Right cardiac atrium (tissue), 5 donors: ENCODE measurements at regions of chr20 and their contacts with region 1.

Region 1: DNA sequence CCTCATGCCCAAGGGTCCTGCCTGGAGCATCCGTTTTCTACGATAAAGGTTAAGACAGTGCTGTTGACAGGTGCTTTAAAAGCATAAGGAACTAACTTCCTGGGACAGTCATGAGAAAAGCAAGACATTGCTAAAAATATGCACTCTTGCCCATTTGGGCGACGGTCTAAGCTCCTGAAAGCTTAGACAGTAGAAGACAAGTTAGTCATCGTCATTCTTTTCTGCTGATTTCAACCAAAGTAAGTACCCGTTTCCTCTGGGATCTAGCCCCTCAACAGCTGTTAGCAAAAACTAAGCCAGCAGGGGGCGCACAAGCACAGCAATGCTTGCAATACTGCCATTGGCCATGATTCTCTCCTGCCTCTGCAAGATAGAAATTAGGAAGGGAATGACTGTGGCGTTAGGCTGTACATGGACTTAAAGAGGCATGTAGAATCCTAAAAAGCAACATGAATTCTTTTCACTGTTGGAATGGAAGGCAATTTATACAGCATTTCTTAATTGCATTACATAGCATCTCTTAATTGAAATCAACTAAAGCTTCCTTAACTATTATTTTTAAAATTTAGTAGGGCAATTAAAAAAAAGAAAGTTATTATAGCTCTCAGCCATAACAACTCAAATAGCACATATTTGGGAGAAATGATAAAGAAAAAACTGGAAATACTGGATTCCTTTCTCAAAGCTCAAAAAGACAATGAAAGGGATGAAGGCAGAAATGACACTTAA is 147.8 kb upstream of the RALGAPA2 start:
- DNase-seq: peak; percentile 87 to 95 (median 91)
- ATAC-seq: peak; percentile 71 to 86
- H3K4me3 ChIP-seq: no peak overlapping the region
- H3K27ac ChIP-seq: no peak overlapping the region
- H3K4me1 ChIP-seq: no peaks in the 10 kb centered on the region
- H3K27me3 ChIP-seq: no peaks in the 10 kb centered on the region

Region 2: DNA sequence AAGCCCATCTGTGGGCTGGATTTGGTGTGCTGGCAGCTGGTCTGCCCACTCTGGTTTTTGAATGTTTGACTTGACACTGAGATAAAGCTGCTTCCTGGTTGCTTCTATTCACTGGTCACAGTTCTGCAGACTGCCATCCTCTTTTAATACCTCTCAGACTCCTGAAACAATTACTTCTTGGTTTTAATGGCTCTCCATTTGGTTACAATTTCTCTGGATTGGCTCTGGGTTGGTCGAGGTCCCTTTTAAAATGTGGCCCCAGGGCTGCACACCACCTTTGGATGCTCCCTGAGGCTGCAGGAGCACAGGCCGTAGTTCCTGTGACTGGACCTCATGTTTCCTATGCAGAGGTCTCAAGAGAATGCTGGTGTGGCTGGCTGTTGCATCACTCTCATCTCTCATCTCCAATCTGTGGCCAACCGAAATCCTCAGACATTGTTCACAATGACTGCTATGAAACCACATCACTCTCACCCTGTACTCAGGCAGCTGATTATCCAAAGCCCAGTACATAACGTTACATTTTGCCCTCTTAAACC is 393.8 kb before region 1 on chr20:
- intact Hi-C with region 1: no loop called
- DNase-seq: no peak
- ATAC-seq: peak; percentile 66 to 85
- H3K4me3 ChIP-seq: no peak overlapping the region
- H3K27ac ChIP-seq: no peak overlapping the region
- H3K4me1 ChIP-seq: peaks cover 3% of the 10 kb centered on the region
- H3K27me3 ChIP-seq: no peaks in the 10 kb centered on the region

Region 3: DNA sequence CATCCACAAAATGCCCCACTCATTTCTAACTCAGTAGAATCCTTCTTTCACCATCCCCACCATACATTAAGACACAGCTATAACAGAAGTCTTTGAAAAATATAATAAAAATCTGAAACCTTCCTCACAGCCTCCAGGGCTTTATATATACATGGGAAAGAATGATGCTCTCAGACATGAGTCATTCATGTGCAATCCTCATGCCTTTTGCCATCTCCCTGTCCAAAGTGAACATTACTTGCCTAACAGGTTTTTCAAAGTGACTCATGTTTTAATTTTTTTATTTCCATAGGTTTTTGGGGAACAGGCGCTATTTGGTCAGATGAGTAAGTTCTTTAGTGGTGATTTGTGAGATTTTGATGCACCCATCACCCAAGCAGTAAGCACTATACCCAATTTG is 310.5 kb before region 1 on chr20:
- intact Hi-C with region 1: no loop called
- DNase-seq: no peak
- ATAC-seq: no peak
- H3K4me3 ChIP-seq: no peak overlapping the region
- H3K27ac ChIP-seq: no peak overlapping the region
- H3K4me1 ChIP-seq: no peaks in the 10 kb centered on the region
- H3K27me3 ChIP-seq: no peaks in the 10 kb centered on the region

Region 4: GRCh38 chr20:20956513-20956931 is 96.3 kb after region 1 on chr20:
- intact Hi-C with region 1: no loop called
- DNase-seq: no peak
- ATAC-seq: no peak
- H3K4me3 ChIP-seq: no peak overlapping the region
- H3K27ac ChIP-seq: no peak overlapping the region
- H3K4me1 ChIP-seq: no peaks in the 10 kb centered on the region
- H3K27me3 ChIP-seq: no peaks in the 10 kb centered on the region

Region 5: DNA sequence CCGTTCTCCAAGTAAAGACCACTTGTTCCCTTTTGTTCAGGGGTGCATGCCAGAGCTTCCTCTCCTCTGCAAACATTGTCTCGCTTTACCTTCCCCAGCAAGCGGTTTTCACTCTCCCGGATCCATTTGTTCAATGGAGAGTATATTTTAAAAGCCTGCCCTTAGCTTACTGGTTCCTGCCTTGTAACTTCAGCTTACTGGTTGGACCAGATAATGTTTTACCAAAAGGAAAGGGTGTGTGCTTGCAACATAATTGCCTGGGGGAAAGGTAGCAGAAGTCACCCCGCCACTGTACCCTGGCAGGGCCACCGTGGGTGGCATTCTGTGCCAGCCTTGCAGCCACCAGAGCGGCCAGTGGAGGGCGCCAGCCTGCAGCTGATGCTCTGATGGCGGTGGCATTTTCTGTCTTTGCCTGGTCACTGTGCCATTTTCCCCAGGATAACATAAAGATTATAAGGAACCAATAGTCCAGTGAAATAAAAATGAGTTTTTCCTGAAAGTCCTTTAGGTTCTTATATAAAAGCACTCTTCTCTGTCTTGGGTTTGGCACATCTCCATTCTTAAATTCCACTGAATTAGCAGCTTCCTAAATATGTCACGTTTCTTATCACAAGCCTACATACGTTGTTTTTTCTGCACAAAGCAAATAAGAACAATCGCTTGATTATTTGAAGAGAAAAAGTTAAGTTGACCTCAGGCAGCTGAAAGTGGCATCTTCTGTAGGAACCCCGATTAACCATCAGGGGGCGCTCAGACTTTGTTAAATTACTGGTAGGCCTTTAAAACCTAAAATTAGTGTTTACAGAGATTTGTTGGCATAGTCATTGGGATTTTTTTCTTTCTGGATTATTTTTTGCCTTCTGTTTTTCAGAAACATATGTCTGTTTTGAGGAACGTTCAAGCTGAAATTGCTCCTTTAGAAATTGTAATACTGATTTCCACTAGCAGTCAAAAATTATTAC is 375.5 kb after region 1 on chr20:
- intact Hi-C with region 1: loop called in 1 of 4 experiments (anchors 10 kb)
- DNase-seq: peak; percentile 35 to 83 (median 79)
- ATAC-seq: peak; percentile 74
- H3K4me3 ChIP-seq: no peak overlapping the region
- H3K27ac ChIP-seq: no peak overlapping the region
- H3K4me1 ChIP-seq: no peaks in the 10 kb centered on the region
- H3K27me3 ChIP-seq: no peaks in the 10 kb centered on the region

Region 6: GRCh38 chr20:21571841-21572690 is 711.8 kb after region 1 on chr20:
- intact Hi-C with region 1: loop called in 1 of 4 experiments (anchors 10 kb)
- DNase-seq: no peak
- ATAC-seq: no peak
- H3K4me3 ChIP-seq: no peak overlapping the region
- H3K27ac ChIP-seq: no peak overlapping the region
- H3K4me1 ChIP-seq: no peaks in the 10 kb centered on the region
- H3K27me3 ChIP-seq: peaks cover 4% of the 10 kb centered on the region